ENCODE measurements at regions of chr5 and their contacts with region 1.

Region 1: DNA sequence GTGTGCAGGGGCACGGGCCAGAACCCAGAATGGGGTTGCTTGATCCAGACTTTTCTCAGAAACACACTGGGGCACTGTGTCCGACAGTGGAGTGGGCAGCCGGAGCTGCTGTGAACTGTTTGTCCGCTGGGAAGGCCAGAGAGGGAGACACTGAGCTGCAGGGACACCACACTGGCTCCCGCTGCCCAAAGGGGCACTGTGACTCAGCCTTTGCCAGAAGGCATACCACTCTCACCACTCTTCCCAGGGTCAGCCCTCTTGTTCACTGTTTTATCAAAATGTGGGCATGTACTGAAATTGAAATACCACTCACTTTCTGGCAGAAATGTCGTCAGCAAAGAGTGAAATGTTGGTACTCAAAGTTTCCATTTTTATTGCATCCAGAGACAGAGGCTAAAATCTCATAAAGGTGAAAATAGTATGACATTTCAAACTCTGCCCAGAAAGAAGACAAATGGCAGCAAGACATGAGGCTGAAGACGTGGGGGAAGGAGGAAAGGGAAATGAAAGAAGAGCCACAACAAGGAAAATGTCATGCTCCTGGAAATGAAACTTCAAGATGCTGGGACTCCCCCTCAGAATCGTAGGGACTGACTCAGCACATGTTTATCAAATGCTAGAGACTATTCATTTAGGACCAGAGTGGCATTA is 4.5 kb upstream of the IL7R start:
- DNase-seq: peak; percentile 82
- ATAC-seq: peak; percentile 47
- H3K4me3 Mint-ChIP-seq: peak overlapping the region; percentile 95
- H3K27ac Mint-ChIP-seq: peak overlapping the region; percentile 99
- H3K4me1 Mint-ChIP-seq: peaks cover 75% of the 10 kb centered on the region
- H3K27me3 Mint-ChIP-seq: no peaks in the 10 kb centered on the region
- CTCF ChIP-seq: no peak

Region 2: GRCh38 chr5:35651002-35651756 is 201.0 kb before region 1 on chr5:
- CTCF ChIA-PET with region 1: interaction called, 5 read pairs
- POLR2A ChIA-PET with region 1: interaction called, 4 read pairs
- intact Hi-C with region 1: loop called (anchors 5 kb)
- DNase-seq: peak; percentile 78
- ATAC-seq: peak; percentile 98
- H3K4me3 Mint-ChIP-seq: no peak overlapping the region
- H3K27ac Mint-ChIP-seq: no peak overlapping the region
- H3K4me1 Mint-ChIP-seq: peaks cover 12% of the 10 kb centered on the region
- H3K27me3 Mint-ChIP-seq: no peaks in the 10 kb centered on the region
- CTCF ChIP-seq: peak; percentile 46

Region 3: GRCh38 chr5:35762368-35762767 is 89.8 kb before region 1 on chr5:
- CTCF ChIA-PET with region 1: no interaction called
- POLR2A ChIA-PET with region 1: no interaction called
- intact Hi-C with region 1: no loop called
- DNase-seq: no peak
- ATAC-seq: no peak
- H3K4me3 Mint-ChIP-seq: no peak overlapping the region
- H3K27ac Mint-ChIP-seq: no peak overlapping the region
- H3K4me1 Mint-ChIP-seq: peaks cover 30% of the 10 kb centered on the region
- H3K27me3 Mint-ChIP-seq: no peaks in the 10 kb centered on the region
- CTCF ChIP-seq: no peak

Region 4: DNA sequence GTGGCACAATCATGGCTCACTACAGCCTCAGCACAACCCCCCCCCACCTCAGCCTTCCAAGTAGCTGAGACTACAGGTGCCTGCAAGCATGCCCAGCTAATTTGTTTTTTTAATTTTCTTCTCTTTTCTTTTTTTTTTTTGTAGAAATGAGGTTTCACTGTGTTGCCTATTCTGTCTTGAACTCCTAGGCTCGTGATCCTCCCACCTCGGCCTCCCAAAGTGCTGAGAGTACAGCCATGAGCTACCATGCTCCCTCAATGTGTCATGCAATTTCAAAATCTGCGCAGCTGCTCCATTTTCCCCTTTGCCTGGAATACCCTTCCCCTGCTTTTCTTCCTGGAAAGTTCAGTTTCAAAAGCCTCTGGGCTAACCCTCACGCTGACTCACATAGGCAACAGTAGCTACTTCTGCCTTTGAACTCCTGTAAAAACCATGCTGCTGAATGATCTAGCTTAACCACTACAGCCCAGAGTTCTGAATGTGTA is 66.6 kb before region 1 on chr5:
- CTCF ChIA-PET with region 1: interaction called, 59 read pairs
- POLR2A ChIA-PET with region 1: interaction called, 253 read pairs
- intact Hi-C with region 1: loop called (anchors 2 kb)
- DNase-seq: peak; percentile 70
- ATAC-seq: peak; percentile 83
- H3K4me3 Mint-ChIP-seq: peak overlapping the region; percentile 33
- H3K27ac Mint-ChIP-seq: peak overlapping the region; percentile 90
- H3K4me1 Mint-ChIP-seq: peaks cover 79% of the 10 kb centered on the region
- H3K27me3 Mint-ChIP-seq: no peaks in the 10 kb centered on the region
- CTCF ChIP-seq: no peak

Region 5: GRCh38 chr5:35815089-35815936 is 36.9 kb before region 1 on chr5:
- CTCF ChIA-PET with region 1: interaction called, 3 read pairs
- POLR2A ChIA-PET with region 1: interaction called, 241 read pairs
- intact Hi-C with region 1: loop called (anchors 2 kb)
- DNase-seq: peak; percentile 49
- ATAC-seq: peak; percentile 42
- H3K4me3 Mint-ChIP-seq: no peak overlapping the region
- H3K27ac Mint-ChIP-seq: no peak overlapping the region
- H3K4me1 Mint-ChIP-seq: peaks cover 50% of the 10 kb centered on the region
- H3K27me3 Mint-ChIP-seq: no peaks in the 10 kb centered on the region
- CTCF ChIP-seq: peak; percentile 59

Region 6: GRCh38 chr5:35838370-35839042 is 13.7 kb before region 1 on chr5:
- CTCF ChIA-PET with region 1: interaction called, 16 read pairs
- POLR2A ChIA-PET with region 1: interaction called, 81 read pairs
- intact Hi-C with region 1: loop called (anchors 2 kb)
- DNase-seq: peak; percentile 78
- ATAC-seq: peak; percentile 75
- H3K4me3 Mint-ChIP-seq: peak overlapping the region; percentile 37
- H3K27ac Mint-ChIP-seq: peak overlapping the region; percentile 91
- H3K4me1 Mint-ChIP-seq: peaks cover 72% of the 10 kb centered on the region
- H3K27me3 Mint-ChIP-seq: no peaks in the 10 kb centered on the region
- CTCF ChIP-seq: no peak

Region 7: DNA sequence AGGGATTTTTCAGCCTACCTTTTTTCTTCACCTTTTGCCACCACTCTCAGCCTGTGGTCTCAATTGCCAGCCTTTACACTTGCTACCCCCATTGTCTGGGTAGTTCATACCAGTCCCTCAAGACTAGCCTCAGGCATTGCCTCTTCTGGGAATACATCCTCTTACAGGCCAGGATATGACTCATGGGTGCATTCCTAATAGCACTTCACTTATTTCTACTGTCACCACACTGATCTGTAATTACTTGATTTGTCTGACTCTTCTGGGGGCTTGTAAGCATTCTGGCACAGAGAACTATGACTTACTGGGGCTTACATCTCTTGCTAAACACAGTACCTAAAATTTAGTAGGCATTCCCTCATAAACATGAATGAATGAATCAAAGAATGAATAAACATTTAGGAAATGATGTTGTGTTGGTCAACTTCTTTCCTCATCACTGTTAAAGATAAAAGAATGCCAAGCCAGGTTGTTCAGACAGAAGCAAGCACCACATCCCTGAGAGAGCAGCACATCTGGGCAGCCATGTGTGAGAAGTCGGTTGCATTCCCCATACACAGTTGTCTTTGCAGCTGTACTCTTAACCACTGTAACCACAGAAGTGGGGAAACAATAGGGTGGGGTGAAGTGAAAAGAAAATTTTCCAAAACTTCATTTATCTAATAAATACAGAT is 32.0 kb after region 1 on chr5:
- CTCF ChIA-PET with region 1: no interaction called
- POLR2A ChIA-PET with region 1: interaction called, 15 read pairs
- intact Hi-C with region 1: no loop called
- DNase-seq: no peak
- ATAC-seq: peak; percentile 81
- H3K4me3 Mint-ChIP-seq: peak overlapping the region; percentile 9
- H3K27ac Mint-ChIP-seq: peak overlapping the region; percentile 90
- H3K4me1 Mint-ChIP-seq: peaks cover 46% of the 10 kb centered on the region
- H3K27me3 Mint-ChIP-seq: no peaks in the 10 kb centered on the region
- CTCF ChIP-seq: no peak

Measured in activated CD8-positive, alpha-beta T cell treated with anti-CD3 and anti-CD28 coated beads for 36 hours (primary cell).